Testis (tissue), 5 donors: ENCODE measurements at regions of chr7 and their contacts with region 1.

Region 1: GRCh38 chr7:139645572-139646523 is 122.4 kb downstream of the CLEC2L start:
- DNase-seq: peak; percentile 88
- H3K4me3 ChIP-seq: no peak overlapping the region
- H3K27ac ChIP-seq: no peak overlapping the region
- H3K4me1 ChIP-seq: no peaks in the 10 kb centered on the region
- H3K27me3 ChIP-seq: no peaks in the 10 kb centered on the region
- CTCF ChIP-seq: peak; percentile 81 to 94 (median 87)
- POLR2A ChIP-seq: no peak

Region 2: DNA sequence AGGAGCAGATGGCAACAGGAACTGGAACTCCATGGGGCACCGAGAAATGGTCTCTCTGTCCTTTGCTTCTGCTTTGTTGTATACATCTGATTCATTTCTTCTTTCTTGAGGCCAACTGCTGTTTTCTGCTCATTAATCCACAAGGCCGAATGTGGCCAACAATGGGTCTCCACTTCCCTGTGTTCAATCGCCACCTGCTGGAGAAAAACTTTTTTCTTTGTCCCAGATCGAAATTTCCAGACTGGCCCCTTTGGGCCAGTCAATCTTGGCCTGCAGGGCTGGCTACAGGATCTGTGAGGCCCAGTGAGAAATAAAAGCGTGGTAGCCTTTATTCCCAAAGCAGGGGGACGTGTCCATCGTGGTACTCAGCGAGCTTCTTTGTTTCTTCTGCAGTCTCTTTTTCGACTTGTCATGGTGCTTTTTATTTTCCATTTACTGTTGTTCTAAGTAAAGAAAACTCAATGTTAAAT is 358.1 kb after region 1 on chr7:
- intact Hi-C with region 1: loop called (anchors 5 kb)
- DNase-seq: peak; percentile 30
- H3K4me3 ChIP-seq: no peak overlapping the region
- H3K27ac ChIP-seq: no peak overlapping the region
- H3K4me1 ChIP-seq: no peaks in the 10 kb centered on the region
- H3K27me3 ChIP-seq: no peaks in the 10 kb centered on the region
- CTCF ChIP-seq: peak in 2 of 3 experiments; percentile 40 to 54
- POLR2A ChIP-seq: no peak